Naive thymus-derived CD4-positive, alpha-beta T cell (primary cell): ENCODE measurements at regions of chr12 and their contacts with region 1.

Region 1: DNA sequence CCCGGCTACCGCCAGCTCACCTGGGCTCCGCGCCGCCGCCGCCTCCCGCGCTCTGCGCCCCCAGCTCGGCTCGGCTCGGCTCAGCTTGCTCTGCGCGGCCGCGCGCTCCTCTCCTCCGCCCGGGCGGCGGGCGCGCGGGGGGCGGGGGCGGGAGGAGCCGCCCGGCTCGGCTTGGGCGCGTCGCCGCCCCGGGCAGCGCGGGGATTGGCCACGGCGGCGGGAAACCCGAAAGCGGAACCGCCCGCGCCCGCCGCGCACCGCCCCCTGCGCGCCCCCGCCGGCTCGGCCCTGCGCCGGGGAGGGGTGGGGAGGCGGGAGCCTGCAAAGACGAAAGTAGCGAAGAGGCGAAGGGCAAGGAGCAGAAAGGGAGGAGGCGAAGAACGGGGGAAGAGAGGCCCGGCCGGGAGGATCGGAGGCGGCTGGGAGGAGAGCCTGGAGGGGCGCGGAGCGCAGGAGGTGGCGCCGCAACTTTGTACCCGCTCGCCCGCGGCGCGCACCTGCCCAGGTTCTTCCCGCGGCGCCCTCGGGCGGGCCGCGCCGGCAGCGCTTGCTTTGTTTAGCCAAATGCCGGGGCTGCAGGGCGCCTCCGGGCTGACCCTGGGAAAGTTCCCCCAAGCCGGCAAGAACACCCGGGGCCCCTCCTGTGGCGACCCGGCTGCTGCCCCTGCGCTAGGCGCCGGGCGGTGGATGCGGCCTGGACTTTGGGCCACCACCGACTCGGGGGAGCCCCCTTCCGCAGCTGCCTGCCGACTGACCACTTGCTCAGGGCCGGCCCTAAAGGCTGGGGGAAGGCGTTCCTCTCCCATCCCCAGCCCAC is at the start of gene CAMKK2:
- DNase-seq: peak; percentile 84 to 95 (median 92)
- ATAC-seq: peak; percentile 94
- H3K4me3 ChIP-seq: peak within 1 kb of the TSS; percentile 87
- H3K4me3 Mint-ChIP-seq: peak within 1 kb of the TSS; percentile 86 to 93 (median 89)
- H3K27ac ChIP-seq: peak within 1 kb of the TSS; percentile 80
- H3K27ac Mint-ChIP-seq: peak within 1 kb of the TSS; percentile 55 to 91 (median 81)
- H3K4me1 ChIP-seq: peaks cover 12 to 14% of the 10 kb centered on the region in 2 donors
- H3K4me1 Mint-ChIP-seq: peaks cover 0 to 43% (median 19%) of the 10 kb centered on the region in 7 donors
- H3K27me3 ChIP-seq: no peaks in the 10 kb centered on the region
- H3K27me3 Mint-ChIP-seq: peaks cover 0 to 4% (median 0%) of the 10 kb centered on the region in 5 donors
- total RNA-seq, gene CAMKK2: 15.5 to 38.7 (median 18.1) TPM

Region 2: GRCh38 chr12:121060149-121061001 is 236.5 kb before region 1 on chr12:
- CTCF ChIA-PET with region 1: no interaction called
- POLR2A ChIA-PET with region 1: no interaction called
- intact Hi-C with region 1: loop called in 1 of 2 experiments (anchors 2 kb)
- DNase-seq: peak; percentile 28 to 78 (median 67)
- ATAC-seq: peak; percentile 97
- H3K4me3 ChIP-seq: peak overlapping the region; percentile 74
- H3K4me3 Mint-ChIP-seq: peak overlapping the region; percentile 73 to 91 (median 85)
- H3K27ac ChIP-seq: peak overlapping the region; percentile 56
- H3K27ac Mint-ChIP-seq: peak overlapping the region; percentile 75 to 98 (median 91)
- H3K4me1 ChIP-seq: peaks cover 7 to 11% of the 10 kb centered on the region in 2 donors
- H3K4me1 Mint-ChIP-seq: peaks cover 9 to 31% (median 17%) of the 10 kb centered on the region in 7 donors
- H3K27me3 ChIP-seq: no peaks in the 10 kb centered on the region
- H3K27me3 Mint-ChIP-seq: no peaks in the 10 kb centered on the region

Region 3: GRCh38 chr12:121240484-121241101 is 56.2 kb before region 1 on chr12:
- CTCF ChIA-PET with region 1: no interaction called
- POLR2A ChIA-PET with region 1: interaction called, 5 read pairs
- intact Hi-C with region 1: loop called (anchors 1 to 5 kb)
- DNase-seq: peak; percentile 78 to 99 (median 96)
- ATAC-seq: peak; percentile 95
- H3K4me3 ChIP-seq: peak overlapping the region; percentile 71
- H3K4me3 Mint-ChIP-seq: peak overlapping the region; percentile 81 to 94 (median 88)
- H3K27ac ChIP-seq: peak overlapping the region; percentile 87
- H3K27ac Mint-ChIP-seq: peak overlapping the region; percentile 90 to 100 (median 99)
- H3K4me1 ChIP-seq: peaks cover 30 to 44% of the 10 kb centered on the region in 2 donors
- H3K4me1 Mint-ChIP-seq: peaks cover 26 to 57% (median 47%) of the 10 kb centered on the region in 7 donors
- H3K27me3 ChIP-seq: no peaks in the 10 kb centered on the region
- H3K27me3 Mint-ChIP-seq: no peaks in the 10 kb centered on the region

Region 4: DNA sequence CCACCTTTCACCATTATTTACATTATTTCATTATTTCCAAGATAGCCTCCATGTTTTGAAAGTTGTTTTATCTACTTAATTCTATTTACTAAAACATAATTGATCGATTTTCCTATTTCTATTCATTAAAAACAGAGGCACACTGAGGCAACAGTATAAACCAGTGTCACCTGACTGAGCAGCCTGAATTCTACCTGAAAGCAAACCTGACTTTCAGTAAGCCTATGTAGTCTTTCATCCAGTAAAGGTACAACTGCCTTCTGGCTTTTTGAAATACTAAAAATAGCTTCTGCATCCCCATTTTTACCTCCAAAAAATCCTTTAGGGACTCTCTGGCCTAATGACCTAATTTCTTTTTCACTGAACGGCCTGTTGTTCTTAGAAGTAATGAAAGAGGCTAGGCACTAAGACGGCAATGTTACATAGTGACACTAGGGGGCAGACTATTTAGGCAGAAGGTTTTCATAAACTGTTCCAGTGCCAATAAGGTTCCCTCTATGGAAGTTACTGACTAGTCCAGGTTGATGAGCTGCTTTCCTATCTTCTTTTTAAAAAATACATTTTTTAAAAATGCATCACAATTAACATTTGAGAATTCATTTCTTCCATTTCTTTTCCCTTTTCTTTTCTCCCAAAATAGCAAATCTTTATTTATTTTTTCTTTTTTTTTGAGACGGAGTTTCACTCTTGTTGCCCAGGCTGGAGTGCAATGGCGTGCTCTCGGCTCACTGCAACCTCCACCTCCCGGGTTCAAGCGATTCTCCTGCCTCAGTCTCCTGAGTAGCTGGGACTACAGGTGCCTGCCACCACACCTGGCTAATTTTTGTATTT is 37.9 kb after region 1 on chr12:
- CTCF ChIA-PET with region 1: no interaction called
- POLR2A ChIA-PET with region 1: interaction called, 3 read pairs
- intact Hi-C with region 1: loop called in 1 of 2 experiments (anchors 2 kb)
- DNase-seq: peak in 8 of 9 donors; percentile 15 to 57 (median 46)
- ATAC-seq: peak; percentile 92
- H3K4me3 ChIP-seq: no peak overlapping the region
- H3K4me3 Mint-ChIP-seq: no peak overlapping the region
- H3K27ac ChIP-seq: no peak overlapping the region
- H3K27ac Mint-ChIP-seq: peak overlapping the region in 2 of 9 donors; percentile 14 to 76
- H3K4me1 ChIP-seq: peaks cover 0 to 3% of the 10 kb centered on the region in 2 donors
- H3K4me1 Mint-ChIP-seq: peaks cover 0 to 7% (median 5%) of the 10 kb centered on the region in 7 donors
- H3K27me3 ChIP-seq: no peaks in the 10 kb centered on the region
- H3K27me3 Mint-ChIP-seq: no peaks in the 10 kb centered on the region

Region 5: GRCh38 chr12:121351820-121352681 is 55.2 kb after region 1 on chr12 and contains the start of gene ANAPC5:
- CTCF ChIA-PET with region 1: no interaction called
- POLR2A ChIA-PET with region 1: no interaction called
- intact Hi-C with region 1: loop called (anchors 1 kb)
- DNase-seq: peak; percentile 61 to 93 (median 89)
- ATAC-seq: peak; percentile 99
- H3K4me3 ChIP-seq: peak within 1 kb of the TSS; percentile 99
- H3K4me3 Mint-ChIP-seq: peak within 1 kb of the TSS; percentile 88 to 100 (median 97)
- H3K27ac ChIP-seq: peak within 1 kb of the TSS; percentile 78
- H3K27ac Mint-ChIP-seq: peak within 1 kb of the TSS; percentile 90 to 100 (median 98)
- H3K4me1 ChIP-seq: peaks cover 6 to 7% of the 10 kb centered on the region in 2 donors
- H3K4me1 Mint-ChIP-seq: peaks cover 25 to 58% (median 42%) of the 10 kb centered on the region in 7 donors
- H3K27me3 ChIP-seq: no peaks in the 10 kb centered on the region
- H3K27me3 Mint-ChIP-seq: peaks cover 0 to 5% (median 0%) of the 10 kb centered on the region in 5 donors
- total RNA-seq, gene ANAPC5: 114 to 148 (median 141) TPM

Region 6: GRCh38 chr12:121712461-121713256 is 415.8 kb after region 1 on chr12 and contains the start of gene TMEM120B:
- CTCF ChIA-PET with region 1: no interaction called
- POLR2A ChIA-PET with region 1: no interaction called
- intact Hi-C with region 1: loop called in 1 of 2 experiments (anchors 1 kb)
- DNase-seq: peak; percentile 75 to 91 (median 86)
- ATAC-seq: peak; percentile 97
- H3K4me3 ChIP-seq: peak within 1 kb of the TSS; percentile 99
- H3K4me3 Mint-ChIP-seq: peak within 1 kb of the TSS; percentile 84 to 97 (median 94)
- H3K27ac ChIP-seq: peak within 1 kb of the TSS; percentile 82
- H3K27ac Mint-ChIP-seq: peak within 1 kb of the TSS; percentile 86 to 96 (median 92)
- H3K4me1 ChIP-seq: peaks cover 11 to 12% of the 10 kb centered on the region in 2 donors
- H3K4me1 Mint-ChIP-seq: peaks cover 7 to 37% (median 26%) of the 10 kb centered on the region in 7 donors
- H3K27me3 ChIP-seq: no peaks in the 10 kb centered on the region
- H3K27me3 Mint-ChIP-seq: no peaks in the 10 kb centered on the region
- total RNA-seq, gene TMEM120B: 7.3 to 14.3 (median 9.2) TPM